Naive thymus-derived CD4-positive, alpha-beta T cell (primary cell): ENCODE measurements at regions of chr21 and their contacts with region 1.

Region 1: GRCh38 chr21:44670642-44671432 is 4.1 kb upstream of the KRTAP12-2 start:
- DNase-seq: no peak
- ATAC-seq: no peak
- H3K4me3 ChIP-seq: no peak overlapping the region
- H3K4me3 Mint-ChIP-seq: no peak overlapping the region
- H3K27ac ChIP-seq: no peak overlapping the region
- H3K27ac Mint-ChIP-seq: no peak overlapping the region
- H3K4me1 ChIP-seq: no peaks in the 10 kb centered on the region
- H3K4me1 Mint-ChIP-seq: peaks cover 0 to 6% (median 0%) of the 10 kb centered on the region in 7 donors
- H3K27me3 ChIP-seq: no peaks in the 10 kb centered on the region
- H3K27me3 Mint-ChIP-seq: peaks cover 0 to 35% (median 3%) of the 10 kb centered on the region in 5 donors

Region 2: DNA sequence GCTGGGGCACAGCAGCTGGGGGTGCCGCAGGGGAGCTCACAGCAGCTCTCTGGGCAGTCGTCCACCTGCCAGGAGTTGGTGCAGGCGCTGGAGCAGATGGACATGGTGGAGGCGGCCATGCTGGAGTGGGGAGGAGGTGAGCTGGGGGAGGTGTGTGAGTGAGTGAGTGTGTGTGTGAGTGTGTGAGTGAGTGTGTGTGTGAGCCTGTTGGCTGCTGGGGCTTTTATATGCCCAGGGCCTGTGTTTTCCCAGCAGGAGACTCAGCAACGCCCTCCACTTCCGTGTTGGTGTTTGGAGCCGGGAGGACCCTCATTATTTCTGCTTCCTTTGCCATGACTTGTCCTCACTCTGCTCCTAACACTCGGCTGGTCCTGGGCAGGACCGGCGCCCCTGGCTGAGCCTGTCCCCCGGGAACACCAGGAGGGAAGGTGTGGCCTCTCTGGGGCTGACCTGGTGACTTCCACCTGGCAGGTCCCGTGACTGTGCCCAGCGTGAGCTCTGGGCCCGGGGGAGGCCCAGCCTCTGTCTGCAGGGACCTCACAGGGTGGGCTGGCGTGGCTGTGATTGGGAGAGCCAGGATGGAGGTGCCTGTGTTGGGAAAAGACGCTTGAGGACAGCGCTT is 119.4 kb before region 1 on chr21 and contains the start of gene KRTAP10-2:
- CTCF ChIA-PET with region 1: no interaction called
- POLR2A ChIA-PET with region 1: no interaction called
- intact Hi-C with region 1: no loop called
- DNase-seq: no peak
- ATAC-seq: no peak
- H3K4me3 ChIP-seq: no peak within 1 kb of the TSS
- H3K4me3 Mint-ChIP-seq: no peak within 1 kb of the TSS
- H3K27ac ChIP-seq: no peak within 1 kb of the TSS
- H3K27ac Mint-ChIP-seq: no peak within 1 kb of the TSS
- H3K4me1 ChIP-seq: peaks cover 15 to 19% of the 10 kb centered on the region in 2 donors
- H3K4me1 Mint-ChIP-seq: peaks cover 16 to 34% (median 30%) of the 10 kb centered on the region in 7 donors
- H3K27me3 ChIP-seq: no peaks in the 10 kb centered on the region
- H3K27me3 Mint-ChIP-seq: peaks cover 0 to 8% (median 0%) of the 10 kb centered on the region in 5 donors
- total RNA-seq, gene KRTAP10-2: not detected

Region 3: GRCh38 chr21:44630440-44630839 is 40.4 kb before region 1 on chr21:
- CTCF ChIA-PET with region 1: no interaction called
- POLR2A ChIA-PET with region 1: no interaction called
- intact Hi-C with region 1: loop called in 1 of 2 experiments (anchors 5 kb)
- DNase-seq: peak in 1 of 9 donors; percentile 13
- ATAC-seq: no peak
- H3K4me3 ChIP-seq: peak overlapping the region; percentile 22
- H3K4me3 Mint-ChIP-seq: peak overlapping the region in 7 of 10 donors; percentile 25 to 75 (median 53)
- H3K27ac ChIP-seq: peak overlapping the region; percentile 14
- H3K27ac Mint-ChIP-seq: peak overlapping the region in 8 of 9 donors; percentile 65 to 88 (median 82)
- H3K4me1 ChIP-seq: peaks cover 20 to 29% of the 10 kb centered on the region in 2 donors
- H3K4me1 Mint-ChIP-seq: peaks cover 4 to 42% (median 28%) of the 10 kb centered on the region in 7 donors
- H3K27me3 ChIP-seq: no peaks in the 10 kb centered on the region
- H3K27me3 Mint-ChIP-seq: peaks cover 0 to 30% (median 0%) of the 10 kb centered on the region in 5 donors

Region 4: GRCh38 chr21:45050786-45051489 is 380.1 kb after region 1 on chr21:
- CTCF ChIA-PET with region 1: no interaction called
- POLR2A ChIA-PET with region 1: no interaction called
- intact Hi-C with region 1: no loop called
- DNase-seq: no peak
- ATAC-seq: no peak
- H3K4me3 ChIP-seq: no peak overlapping the region
- H3K4me3 Mint-ChIP-seq: no peak overlapping the region
- H3K27ac ChIP-seq: no peak overlapping the region
- H3K27ac Mint-ChIP-seq: no peak overlapping the region
- H3K4me1 ChIP-seq: no peaks in the 10 kb centered on the region
- H3K4me1 Mint-ChIP-seq: peaks cover 0 to 3% (median 0%) of the 10 kb centered on the region in 7 donors
- H3K27me3 ChIP-seq: no peaks in the 10 kb centered on the region
- H3K27me3 Mint-ChIP-seq: peaks cover 7 to 40% (median 18%) of the 10 kb centered on the region in 5 donors